Posterior cingulate gyrus (tissue), 11 donors: ENCODE measurements at regions of chr2 and their contacts with region 1.

Region 1: GRCh38 chr2:99154643-99155536 is at the starts of genes LIPT1 and TSGA10:
- DNase-seq: peak; percentile 85 to 99 (median 90)

Region 2: GRCh38 chr2:99141110-99142108 is 13.5 kb before region 1 on chr2 and contains the start of gene C2orf15:
- intact Hi-C with region 1: loop called (anchors 2 kb)
- DNase-seq: peak; percentile 89 to 99 (median 94)

Region 3: DNA sequence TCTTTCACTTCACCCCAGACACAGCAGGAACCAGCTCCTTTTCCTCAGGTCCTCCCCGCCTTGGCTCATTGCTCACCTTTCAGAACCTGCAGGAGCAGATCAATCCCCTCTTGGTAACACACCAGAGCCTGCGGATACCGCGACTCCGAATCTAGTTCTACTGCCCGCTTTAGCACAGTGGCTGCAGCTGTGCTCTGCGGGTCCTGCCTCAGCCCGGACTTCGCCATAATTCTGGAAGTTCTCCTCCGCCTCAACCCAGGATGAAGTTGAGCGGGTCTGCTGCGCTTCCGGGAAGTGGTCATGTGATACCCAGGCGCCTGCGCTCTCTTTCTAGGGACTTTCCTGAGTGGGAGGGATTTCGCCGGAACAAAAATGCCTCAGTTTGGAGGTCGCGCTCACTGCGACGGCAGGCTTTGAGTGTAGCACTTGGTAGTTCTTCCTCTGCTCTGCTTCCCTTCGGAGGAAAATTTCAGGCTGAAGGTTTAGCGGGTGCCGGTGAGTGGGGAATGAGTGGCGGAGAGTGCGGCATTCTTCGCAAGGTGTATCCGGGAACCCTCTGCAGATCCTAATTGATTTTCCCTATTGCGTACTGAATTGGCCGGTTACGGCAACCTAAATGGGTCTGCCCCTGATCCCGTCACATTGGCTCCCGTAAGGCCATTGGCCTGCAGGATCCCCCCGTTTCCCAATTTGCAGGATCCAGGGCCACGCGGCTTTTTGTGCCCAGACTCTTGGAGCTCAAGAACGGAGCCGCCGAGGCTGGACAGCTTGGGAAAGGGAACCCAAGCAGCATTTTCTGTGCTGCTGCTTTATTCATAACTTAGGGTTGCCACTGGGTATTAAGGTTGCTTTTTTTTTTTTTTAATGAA is 26.1 kb after region 1 on chr2 and contains the starts of genes MITD1 and MRPL30:
- intact Hi-C with region 1: loop called (anchors 2 kb)
- DNase-seq: peak; percentile 91 to 99 (median 95)

Region 4: GRCh38 chr2:99201959-99202678 is 47.2 kb after region 1 on chr2:
- intact Hi-C with region 1: no loop called
- DNase-seq: no peak

Region 5: GRCh38 chr2:99337113-99338028 is 182.5 kb after region 1 on chr2 and contains the start of gene EIF5B:
- intact Hi-C with region 1: loop called (anchors 10 kb)
- DNase-seq: peak; percentile 94 to 100 (median 97)